Activated CD4-positive, alpha-beta T cell treated with anti-CD3 and anti-CD28 coated beads for 36 hours (primary cell): ENCODE measurements at regions of chr16 and their contacts with region 1.

Region 1: GRCh38 chr16:4766874-4767628 is at the start of gene ZNF500:
- DNase-seq: peak; percentile 97
- ATAC-seq: peak; percentile 78
- H3K4me3 Mint-ChIP-seq: peak within 1 kb of the TSS; percentile 89
- H3K27ac Mint-ChIP-seq: peak within 1 kb of the TSS; percentile 91
- H3K4me1 Mint-ChIP-seq: peaks cover 25% of the 10 kb centered on the region
- H3K27me3 Mint-ChIP-seq: no peaks in the 10 kb centered on the region
- total RNA-seq, gene ZNF500: 10.3 to 11.6 TPM

Region 2: GRCh38 chr16:4957720-4958509 is 190.9 kb after region 1 on chr16 and contains the start of gene SEC14L5:
- CTCF ChIA-PET with region 1: interaction called, 5 read pairs
- POLR2A ChIA-PET with region 1: no interaction called
- intact Hi-C with region 1: loop called (anchors 1 to 5 kb)
- DNase-seq: peak; percentile 98
- ATAC-seq: peak; percentile 95
- H3K4me3 Mint-ChIP-seq: peak within 1 kb of the TSS; percentile 75
- H3K27ac Mint-ChIP-seq: peak within 1 kb of the TSS; percentile 1
- H3K4me1 Mint-ChIP-seq: peaks cover 12% of the 10 kb centered on the region
- H3K27me3 Mint-ChIP-seq: peaks cover 33% of the 10 kb centered on the region
- total RNA-seq, gene SEC14L5: 0.09 to 0.28 TPM